K562 (cell line): ENCODE measurements at regions of chr17 and their contacts with region 1.

Region 1: GRCh38 chr17:43316522-43317142 is 82.2 kb upstream of the ARL4D start:
- DNase-seq: peak; percentile 13 to 45 (median 15)
- ATAC-seq: no peak
- H3K4me3 ChIP-seq: no peak overlapping the region
- H3K27ac ChIP-seq: no peak overlapping the region; the same call in 2 of the 3 replicates
- H3K4me1 ChIP-seq: peaks cover 2 to 11% of the 10 kb centered on the region in 2 experiments; a peak in 3 of 5 replicates
- H3K27me3 ChIP-seq: no peaks in the 10 kb centered on the region
- CTCF ChIP-seq: no peak
- EP300 ChIP-seq: no peak
- POLR2A ChIP-seq: no peak
- RAD21 ChIP-seq: no peak

Region 2: DNA sequence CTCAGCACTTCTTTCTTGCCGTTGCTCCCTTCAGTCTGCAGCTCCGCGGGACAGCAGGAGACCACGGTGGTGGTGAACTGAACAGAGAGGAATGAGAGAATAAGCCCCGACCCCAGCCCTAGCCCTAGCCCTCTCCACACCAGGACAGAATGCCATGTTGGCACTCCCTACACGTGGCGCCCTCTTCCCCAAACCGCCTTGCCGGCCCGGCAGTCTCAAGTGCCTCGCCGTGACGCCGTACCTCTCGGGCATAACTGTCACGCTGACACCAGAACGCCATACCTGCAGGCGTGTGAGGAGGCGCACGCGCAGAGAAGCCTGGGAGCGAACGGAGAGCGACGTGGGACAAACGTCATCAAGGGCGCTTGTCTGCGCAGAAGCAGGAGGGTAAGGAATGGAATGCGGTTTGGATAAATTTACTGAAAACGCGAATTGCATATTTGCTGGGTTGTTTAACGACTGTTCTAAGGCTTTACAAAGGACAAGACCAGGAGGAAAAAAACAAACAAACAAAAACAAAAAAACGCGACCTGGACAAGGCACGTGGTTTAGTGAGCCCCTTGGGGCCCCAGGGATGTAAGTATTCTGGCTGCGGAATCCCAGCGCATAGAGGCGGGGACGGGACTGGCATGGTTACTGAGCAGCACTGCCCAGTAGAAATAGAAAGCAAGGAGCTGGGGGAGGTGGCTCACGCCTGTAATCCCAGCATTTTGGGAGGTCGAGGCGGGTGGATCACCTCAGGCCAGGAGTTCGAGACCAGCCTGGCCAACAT is 352.3 kb before region 1 on chr17 and contains the start of gene AARSD1:
- CTCF ChIA-PET with region 1: no interaction called
- POLR2A ChIA-PET with region 1: interaction called, 11 read pairs
- in situ Hi-C with region 1: no loop called
- intact Hi-C with region 1: no loop called
- DNase-seq: peak; percentile 79 to 97 (median 86)
- ATAC-seq: peak; percentile 94
- H3K4me3 ChIP-seq: peak within 1 kb of the TSS; percentile 67
- H3K27ac ChIP-seq: peak within 1 kb of the TSS; percentile 86
- H3K4me1 ChIP-seq: peaks cover 3 to 10% of the 10 kb centered on the region in 2 experiments; a peak in 4 of 5 replicates
- H3K27me3 ChIP-seq: no peaks in the 10 kb centered on the region
- CTCF ChIP-seq: no peak
- EP300 ChIP-seq: no peak
- POLR2A ChIP-seq: peak; percentile 97
- RAD21 ChIP-seq: no peak
- polyA plus RNA-seq, gene AARSD1: 51.7 to 91.5 TPM

Region 3: DNA sequence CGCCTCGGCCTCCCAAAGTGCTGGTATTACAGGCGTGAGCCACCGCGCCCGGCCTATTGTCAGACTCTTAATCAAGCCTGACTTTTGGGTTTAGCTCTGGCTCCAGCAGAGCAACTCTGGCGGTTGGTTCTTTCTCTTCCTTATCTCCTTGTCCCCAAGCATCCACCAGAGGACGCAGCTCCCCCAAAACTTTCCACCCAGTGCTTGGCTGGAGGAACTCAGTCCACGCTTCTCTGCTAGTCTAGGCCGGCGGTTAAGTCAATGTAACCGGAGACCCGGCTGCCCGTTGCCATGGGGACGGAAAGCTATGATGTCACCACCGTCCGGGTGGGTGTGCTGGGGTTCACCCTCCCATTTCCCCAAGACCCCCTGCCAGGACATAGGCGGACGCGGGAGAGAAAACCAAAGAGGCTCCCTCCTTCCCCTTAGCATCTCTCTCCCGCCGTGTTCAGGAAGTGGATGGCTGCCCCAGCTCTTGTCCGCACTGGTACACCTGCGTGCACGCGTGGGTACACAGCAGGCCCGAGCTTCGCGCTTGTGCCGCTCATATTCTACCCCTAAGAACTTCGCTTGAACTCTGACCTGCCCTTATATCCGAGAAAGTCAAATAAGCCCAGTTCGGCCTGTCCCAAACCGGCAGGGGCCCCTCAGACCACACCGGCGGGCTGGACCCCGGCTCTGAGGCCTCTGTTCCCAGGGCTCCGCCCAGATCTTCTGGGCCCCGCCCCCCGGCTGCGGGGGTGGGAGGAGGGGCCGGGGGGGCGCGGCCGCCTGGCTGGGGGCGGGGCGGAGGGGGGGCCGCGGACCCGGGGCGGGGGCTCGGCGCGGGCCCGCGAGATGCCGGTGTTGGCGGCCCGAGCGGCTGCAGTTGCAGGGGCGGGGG is 292.0 kb before region 1 on chr17 and contains the start of gene RND2:
- CTCF ChIA-PET with region 1: no interaction called
- POLR2A ChIA-PET with region 1: interaction called, 79 read pairs
- in situ Hi-C with region 1: loop called (anchors 10 kb)
- intact Hi-C with region 1: loop called (anchors 1 kb)
- DNase-seq: peak; percentile 97 to 98 (median 97)
- ATAC-seq: peak; percentile 75
- H3K4me3 ChIP-seq: peak within 1 kb of the TSS; percentile 58
- H3K27ac ChIP-seq: peak within 1 kb of the TSS; percentile 92
- H3K4me1 ChIP-seq: peaks cover 13 to 66% of the 10 kb centered on the region in 2 experiments
- H3K27me3 ChIP-seq: no peaks in the 10 kb centered on the region
- CTCF ChIP-seq: peak; percentile 89 to 95 (median 90)
- EP300 ChIP-seq: peak; percentile 62
- POLR2A ChIP-seq: peak; percentile 84
- RAD21 ChIP-seq: peak; percentile 75 to 87
- polyA plus RNA-seq, gene RND2: 0.15 to 0.39 TPM

Region 4: GRCh38 chr17:43125133-43125966 is 191.3 kb before region 1 on chr17 and contains the start of gene BRCA1:
- CTCF ChIA-PET with region 1: no interaction called
- POLR2A ChIA-PET with region 1: interaction called, 14 read pairs
- in situ Hi-C with region 1: no loop called
- intact Hi-C with region 1: no loop called
- DNase-seq: peak; percentile 94 to 99 (median 96)
- ATAC-seq: peak; percentile 96
- H3K4me3 ChIP-seq: peak within 1 kb of the TSS; percentile 74
- H3K27ac ChIP-seq: peak within 1 kb of the TSS; percentile 98
- H3K4me1 ChIP-seq: peaks cover 4 to 13% of the 10 kb centered on the region in 2 experiments; a peak in 4 of 5 replicates
- H3K27me3 ChIP-seq: no peaks in the 10 kb centered on the region
- CTCF ChIP-seq: no peak
- EP300 ChIP-seq: peak; percentile 71
- POLR2A ChIP-seq: peak; percentile 89
- RAD21 ChIP-seq: no peak
- polyA plus RNA-seq, gene BRCA1: 25.9 to 35.6 TPM

Region 5: GRCh38 chr17:43200127-43200526 is 116.5 kb before region 1 on chr17:
- CTCF ChIA-PET with region 1: no interaction called
- POLR2A ChIA-PET with region 1: interaction called, 48 read pairs
- in situ Hi-C with region 1: no loop called
- intact Hi-C with region 1: no loop called
- DNase-seq: peak in 1 of 4 experiments; percentile 11
- ATAC-seq: peak; percentile 83
- H3K4me3 ChIP-seq: no peak overlapping the region
- H3K27ac ChIP-seq: no peak overlapping the region
- H3K4me1 ChIP-seq: no peaks in the 10 kb centered on the region
- H3K27me3 ChIP-seq: no peaks in the 10 kb centered on the region
- CTCF ChIP-seq: no peak; a peak in 1 of 6 replicates
- EP300 ChIP-seq: no peak
- POLR2A ChIP-seq: no peak
- RAD21 ChIP-seq: no peak

Region 6: GRCh38 chr17:43367737-43368242 is 51.2 kb after region 1 on chr17:
- CTCF ChIA-PET with region 1: no interaction called
- POLR2A ChIA-PET with region 1: interaction called, 28 read pairs
- in situ Hi-C with region 1: no loop called
- intact Hi-C with region 1: no loop called
- DNase-seq: peak in 2 of 4 experiments; percentile 27 to 48
- ATAC-seq: peak; percentile 85
- H3K4me3 ChIP-seq: no peak overlapping the region
- H3K27ac ChIP-seq: peak overlapping the region; percentile 88
- H3K4me1 ChIP-seq: peaks cover 11 to 20% of the 10 kb centered on the region in 2 experiments
- H3K27me3 ChIP-seq: no peaks in the 10 kb centered on the region
- CTCF ChIP-seq: no peak
- EP300 ChIP-seq: no peak
- POLR2A ChIP-seq: peak; percentile 100
- RAD21 ChIP-seq: no peak